Heart right ventricle (tissue), 16 donors: ENCODE measurements at regions of chr2 and their contacts with region 1.

Region 1: GRCh38 chr2:32951672-32952071 is 4.9 kb downstream of the LTBP1 start:
- DNase-seq: no peak
- ATAC-seq: no peak
- H3K4me3 ChIP-seq: no peak overlapping the region
- H3K27ac ChIP-seq: no peak overlapping the region
- H3K4me1 ChIP-seq: peaks cover 0 to 66% (median 25%) of the 10 kb centered on the region in 9 donors
- H3K27me3 ChIP-seq: peaks cover 0 to 57% (median 0%) of the 10 kb centered on the region in 7 donors
- CTCF ChIP-seq: no peak

Region 2: GRCh38 chr2:32788114-32788513 is 163.6 kb before region 1 on chr2:
- intact Hi-C with region 1: no loop called
- DNase-seq: peak in 1 of 2 donors; percentile 12
- ATAC-seq: peak in 1 of 8 donors; percentile 16
- H3K4me3 ChIP-seq: no peak overlapping the region
- H3K27ac ChIP-seq: peak overlapping the region in 3 of 10 donors; percentile 9 to 35 (median 28)
- H3K4me1 ChIP-seq: peaks cover 0 to 49% (median 38%) of the 10 kb centered on the region in 9 donors
- H3K27me3 ChIP-seq: no peaks in the 10 kb centered on the region
- CTCF ChIP-seq: no peak

Region 3: GRCh38 chr2:33015421-33016142 is 63.9 kb after region 1 on chr2:
- intact Hi-C with region 1: loop called in 5 of 10 experiments (anchors 5 to 10 kb)
- DNase-seq: no peak
- ATAC-seq: peak; percentile 50 to 93 (median 84)
- H3K4me3 ChIP-seq: no peak overlapping the region
- H3K27ac ChIP-seq: peak overlapping the region in 9 of 10 donors; percentile 29 to 86 (median 63)
- H3K4me1 ChIP-seq: peaks cover 0 to 42% (median 18%) of the 10 kb centered on the region in 9 donors
- H3K27me3 ChIP-seq: no peaks in the 10 kb centered on the region
- CTCF ChIP-seq: no peak

Region 4: GRCh38 chr2:33366473-33366872 is 414.8 kb after region 1 on chr2:
- intact Hi-C with region 1: loop called in 1 of 10 experiments (anchors 10 kb)
- DNase-seq: peak; percentile 35 to 47
- ATAC-seq: peak; percentile 86 to 96 (median 92)
- H3K4me3 ChIP-seq: no peak overlapping the region
- H3K27ac ChIP-seq: peak overlapping the region in 6 of 10 donors; percentile 8 to 63 (median 48)
- H3K4me1 ChIP-seq: peaks cover 0 to 23% (median 3%) of the 10 kb centered on the region in 9 donors
- H3K27me3 ChIP-seq: no peaks in the 10 kb centered on the region
- CTCF ChIP-seq: no peak

Region 5: GRCh38 chr2:33378556-33379210 is 427.0 kb after region 1 on chr2:
- intact Hi-C with region 1: loop called in 1 of 10 experiments (anchors 5 kb)
- DNase-seq: no peak
- ATAC-seq: peak in 7 of 8 donors; percentile 55 to 80 (median 68)
- H3K4me3 ChIP-seq: no peak overlapping the region
- H3K27ac ChIP-seq: peak overlapping the region in 6 of 10 donors; percentile 8 to 52 (median 30)
- H3K4me1 ChIP-seq: peaks cover 0 to 12% (median under 1%) of the 10 kb centered on the region in 9 donors
- H3K27me3 ChIP-seq: no peaks in the 10 kb centered on the region
- CTCF ChIP-seq: no peak